ENCODE measurements at regions of chr19 and their contacts with region 1.

Region 1: DNA sequence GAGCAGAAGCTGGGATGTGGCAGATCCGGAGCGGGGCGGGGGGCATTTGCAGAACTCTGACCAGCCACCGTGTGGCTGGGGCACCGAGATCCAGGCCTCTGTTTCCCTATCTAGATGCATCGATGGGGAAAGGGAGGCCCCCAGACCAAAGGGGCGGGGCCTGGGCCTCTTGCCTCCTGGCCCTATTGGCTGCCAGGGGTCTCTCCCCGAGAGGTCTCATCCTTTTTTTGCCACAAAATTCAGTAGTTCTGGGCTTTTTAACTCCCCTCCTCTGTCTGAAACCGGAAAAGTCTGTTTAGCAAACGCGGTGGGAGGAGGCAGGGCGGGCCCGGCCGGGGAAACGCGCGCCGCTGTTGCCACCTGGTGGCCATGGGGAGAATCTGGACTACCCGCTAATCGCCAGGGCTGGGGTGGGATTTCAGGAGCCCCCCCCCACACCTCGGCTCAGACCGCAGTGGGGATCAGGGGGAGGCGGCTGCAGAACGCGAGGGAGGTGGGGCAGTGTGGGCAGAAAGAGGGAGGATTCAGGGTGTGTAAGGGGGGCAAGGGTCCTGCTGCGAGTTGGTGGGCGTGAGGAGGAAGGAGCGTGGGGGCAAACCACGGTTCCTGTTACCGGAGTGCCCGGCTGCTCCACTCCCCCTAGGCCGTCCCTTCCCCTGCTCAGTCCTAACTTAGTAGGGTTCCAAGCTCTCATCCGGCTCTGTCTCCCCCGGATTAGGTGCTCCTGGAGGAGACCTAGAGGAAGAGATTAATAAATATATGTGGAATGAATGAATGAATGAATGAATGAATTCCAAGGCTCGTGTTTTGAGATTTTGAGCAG is 28.3 kb downstream of the IL12RB1 start:
- DNase-seq: peak; percentile 81
- H3K4me3 ChIP-seq: peak overlapping the region in 1 of 4 donors; percentile 17
- H3K27ac ChIP-seq: peak overlapping the region; percentile 66 to 81 (median 78)
- H3K4me1 ChIP-seq: peaks cover 0 to 13% (median 12%) of the 10 kb centered on the region in 4 donors
- H3K27me3 ChIP-seq: peaks cover 3% of the 10 kb centered on the region
- CTCF ChIP-seq: peak; percentile 94 to 99 (median 96)
- EP300 ChIP-seq: no peak
- POLR2A ChIP-seq: no peak

Region 2: DNA sequence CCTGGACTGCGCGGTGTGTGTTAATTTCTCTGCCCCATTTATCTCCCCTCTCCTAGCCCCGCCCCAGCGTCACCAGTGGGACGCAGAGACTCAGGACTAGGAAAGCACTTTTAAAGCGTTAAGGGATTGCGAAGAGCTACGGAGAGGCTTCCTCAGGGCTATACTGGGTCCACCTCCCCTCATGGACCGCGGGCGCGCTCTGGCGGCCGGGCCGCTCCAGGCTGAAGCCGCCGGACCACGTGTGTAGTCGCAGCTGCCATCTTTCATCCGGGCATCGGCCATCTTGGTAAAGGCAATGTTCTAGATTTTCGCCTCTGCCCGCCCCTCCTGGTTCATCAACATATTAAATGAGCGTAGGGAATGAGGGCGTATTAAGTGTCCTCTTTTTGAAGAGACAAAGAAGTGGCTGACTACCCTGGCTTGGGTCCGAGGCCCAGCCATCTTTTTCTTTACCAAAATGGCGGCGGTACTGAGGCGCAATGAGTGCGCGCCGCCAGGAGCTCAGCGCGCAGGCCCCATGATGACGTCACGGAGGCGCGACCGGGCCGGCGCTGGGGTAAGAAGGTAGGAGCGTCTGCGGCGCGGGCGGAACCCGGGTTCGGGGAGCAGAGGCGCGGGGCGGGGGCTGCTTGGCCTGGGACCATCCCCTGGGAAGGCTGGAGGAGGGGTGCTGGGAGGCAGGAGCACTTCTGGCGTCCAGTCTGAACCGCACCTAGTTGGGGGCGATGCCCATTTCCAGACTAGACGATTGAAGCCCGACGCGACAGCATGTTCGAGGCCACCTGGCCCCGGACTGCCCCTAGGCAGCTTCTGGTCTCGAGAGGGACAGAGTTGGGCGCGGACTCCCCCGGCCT is 125.7 kb before region 1 on chr19 and contains the start of gene CCDC124:
- in situ Hi-C with region 1: loop called in 3 of 4 experiments (anchors 10 to 25 kb)
- intact Hi-C with region 1: no loop called
- DNase-seq: peak; percentile 95
- H3K4me3 ChIP-seq: peak within 1 kb of the TSS; percentile 64 to 92 (median 87)
- H3K27ac ChIP-seq: peak within 1 kb of the TSS; percentile 81 to 86 (median 84)
- H3K4me1 ChIP-seq: peaks cover 10 to 22% (median 16%) of the 10 kb centered on the region in 4 donors
- H3K27me3 ChIP-seq: no peaks in the 10 kb centered on the region
- CTCF ChIP-seq: peak; percentile 72 to 99 (median 93)
- EP300 ChIP-seq: no peak
- POLR2A ChIP-seq: peak; percentile 91
- total RNA-seq, gene CCDC124: 36.9 to 93.5 (median 41.4) TPM

Region 3: GRCh38 chr19:17973759-17974158 is 84.7 kb before region 1 on chr19:
- in situ Hi-C with region 1: no loop called
- intact Hi-C with region 1: no loop called
- DNase-seq: no peak
- H3K4me3 ChIP-seq: no peak overlapping the region
- H3K27ac ChIP-seq: no peak overlapping the region
- H3K4me1 ChIP-seq: no peaks in the 10 kb centered on the region
- H3K27me3 ChIP-seq: no peaks in the 10 kb centered on the region
- CTCF ChIP-seq: no peak
- EP300 ChIP-seq: no peak
- POLR2A ChIP-seq: no peak

Region 4: DNA sequence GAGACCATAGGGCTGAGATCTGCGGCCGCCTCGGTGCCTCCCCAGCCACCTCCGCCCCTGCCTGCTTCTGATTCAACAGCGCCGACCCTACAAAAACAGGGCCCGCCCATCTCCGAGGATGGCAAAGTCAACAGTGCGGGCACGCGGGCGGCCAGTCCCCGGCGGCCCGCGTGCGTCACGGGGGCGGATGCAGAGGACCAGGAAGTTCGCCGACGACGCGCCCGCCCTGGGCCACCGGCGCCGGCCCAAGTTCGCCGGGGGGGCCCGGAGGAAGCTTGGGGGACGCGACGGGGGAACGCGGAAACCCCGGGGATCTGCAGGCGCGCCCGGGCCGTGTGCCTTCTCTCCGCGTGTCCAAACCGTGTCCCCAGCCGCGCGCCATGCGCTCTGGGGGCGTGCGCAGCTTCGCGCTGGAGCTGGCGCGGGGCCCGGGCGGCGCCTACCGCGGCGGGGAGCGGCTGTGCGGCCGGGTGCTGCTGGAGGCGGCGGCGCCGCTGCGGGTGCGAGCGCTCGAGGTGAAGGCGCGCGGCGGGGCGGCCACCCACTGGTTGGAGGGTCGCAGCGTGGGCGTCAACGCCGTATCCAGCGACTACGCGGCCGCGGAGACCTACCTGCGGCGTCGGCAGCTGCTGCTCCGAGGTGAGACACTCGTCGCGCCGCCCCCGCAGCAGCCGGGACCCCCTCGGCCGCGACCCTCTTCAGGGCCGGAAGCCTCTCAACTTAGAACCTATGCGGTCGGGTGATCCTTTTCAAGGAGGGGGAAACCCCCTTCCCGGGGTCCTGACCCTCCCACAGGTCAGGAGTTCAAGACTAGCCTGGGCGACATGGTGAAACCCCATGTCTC is 57.3 kb before region 1 on chr19:
- in situ Hi-C with region 1: loop called in 3 of 4 experiments (anchors 5 to 10 kb)
- intact Hi-C with region 1: loop called (anchors 2 kb)
- DNase-seq: peak; percentile 95
- H3K4me3 ChIP-seq: peak overlapping the region; percentile 69 to 86 (median 78)
- H3K27ac ChIP-seq: peak overlapping the region; percentile 89 to 92 (median 90)
- H3K4me1 ChIP-seq: peaks cover 4 to 28% (median 19%) of the 10 kb centered on the region in 4 donors
- H3K27me3 ChIP-seq: no peaks in the 10 kb centered on the region
- CTCF ChIP-seq: no peak
- EP300 ChIP-seq: no peak
- POLR2A ChIP-seq: peak; percentile 84

Region 5: DNA sequence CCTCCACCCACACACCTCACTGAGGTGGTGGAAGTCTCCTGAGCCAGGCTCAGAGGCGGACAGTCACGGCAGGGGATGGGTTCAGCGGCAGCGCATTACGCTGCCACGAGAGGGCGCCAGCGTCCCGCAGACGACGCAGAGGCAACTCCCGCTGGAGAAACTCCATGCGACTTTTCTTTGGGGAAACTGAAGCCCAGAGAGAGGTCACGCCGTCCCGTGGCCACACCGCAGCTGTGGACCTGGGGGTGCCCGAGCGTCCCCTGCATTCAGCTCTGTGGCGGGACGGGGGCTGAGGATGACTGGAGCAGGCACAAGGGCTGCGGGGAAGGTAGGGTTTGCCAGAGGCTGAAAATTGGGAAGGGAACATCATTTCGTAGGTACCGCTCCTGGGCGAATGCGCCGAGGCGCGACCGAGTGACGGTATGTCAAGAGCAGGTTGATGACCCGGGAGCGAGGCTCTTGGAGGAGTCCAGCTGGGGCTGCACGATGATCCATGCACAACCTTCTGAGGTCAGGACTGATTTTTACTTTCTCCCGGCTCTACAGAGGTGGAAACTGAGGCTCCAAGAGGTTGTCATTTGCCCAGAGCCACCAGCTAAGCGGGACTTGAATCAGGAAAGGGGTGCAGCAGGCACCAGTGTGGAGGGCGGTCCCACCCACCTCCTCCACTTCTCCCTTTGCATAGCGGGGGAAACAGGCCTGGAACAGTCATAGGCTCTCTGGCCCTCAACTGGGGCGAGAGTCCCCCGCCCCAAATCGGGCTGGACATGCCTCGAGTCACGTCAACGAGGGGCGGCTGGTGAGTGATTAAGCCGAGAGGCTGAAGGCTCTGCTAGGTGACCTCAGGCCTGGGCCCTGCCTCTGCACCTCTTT is 51.1 kb before region 1 on chr19:
- in situ Hi-C with region 1: loop called (anchors 5 to 10 kb)
- intact Hi-C with region 1: loop called (anchors 2 kb)
- DNase-seq: peak; percentile 88
- H3K4me3 ChIP-seq: peak overlapping the region; percentile 3 to 52 (median 40)
- H3K27ac ChIP-seq: peak overlapping the region; percentile 80 to 89 (median 86)
- H3K4me1 ChIP-seq: peaks cover 0 to 26% (median 18%) of the 10 kb centered on the region in 4 donors
- H3K27me3 ChIP-seq: no peaks in the 10 kb centered on the region
- CTCF ChIP-seq: peak; percentile 95 to 99 (median 98)
- EP300 ChIP-seq: no peak
- POLR2A ChIP-seq: peak; percentile 11

Region 6: DNA sequence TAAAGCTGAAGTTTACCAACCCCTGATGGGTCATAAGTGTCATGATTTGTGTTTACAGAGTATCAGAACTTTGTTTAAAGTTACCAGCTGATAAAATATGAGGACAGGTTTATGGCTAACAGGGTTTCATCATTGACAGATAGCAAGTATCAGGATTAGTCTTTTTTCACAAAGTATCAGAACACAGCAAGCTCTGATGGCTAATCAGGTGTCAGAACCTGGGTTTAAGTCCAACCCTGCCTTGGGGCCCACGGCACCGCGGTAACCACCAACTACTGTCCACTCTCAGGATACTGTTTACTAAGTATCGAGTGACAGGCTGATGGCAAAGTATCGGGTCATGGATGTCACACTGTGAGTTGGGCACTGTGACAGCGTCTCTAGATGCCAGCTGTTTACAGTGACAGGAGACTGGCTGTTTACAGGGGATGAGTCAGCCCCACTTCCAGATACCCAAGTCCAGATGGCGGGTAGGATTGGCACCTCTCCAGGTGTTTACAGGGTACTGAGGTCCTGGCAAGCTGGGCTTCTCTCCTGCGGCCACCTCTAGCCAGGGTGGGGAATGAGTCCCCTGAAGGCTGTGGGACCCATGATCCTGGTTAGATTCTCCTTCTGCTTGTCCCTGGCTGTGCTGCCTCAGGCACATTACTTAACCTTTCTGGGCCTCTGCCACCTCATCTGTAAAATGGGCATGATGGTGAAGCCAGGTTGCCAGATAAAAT is 28.6 kb before region 1 on chr19:
- in situ Hi-C with region 1: no loop called
- intact Hi-C with region 1: no loop called
- DNase-seq: peak; percentile 59
- H3K4me3 ChIP-seq: no peak overlapping the region
- H3K27ac ChIP-seq: peak overlapping the region in 2 of 4 donors; percentile 11 to 15
- H3K4me1 ChIP-seq: peaks cover 0 to 13% (median 0%) of the 10 kb centered on the region in 4 donors
- H3K27me3 ChIP-seq: no peaks in the 10 kb centered on the region
- CTCF ChIP-seq: no peak
- EP300 ChIP-seq: no peak
- POLR2A ChIP-seq: no peak

Region 7: DNA sequence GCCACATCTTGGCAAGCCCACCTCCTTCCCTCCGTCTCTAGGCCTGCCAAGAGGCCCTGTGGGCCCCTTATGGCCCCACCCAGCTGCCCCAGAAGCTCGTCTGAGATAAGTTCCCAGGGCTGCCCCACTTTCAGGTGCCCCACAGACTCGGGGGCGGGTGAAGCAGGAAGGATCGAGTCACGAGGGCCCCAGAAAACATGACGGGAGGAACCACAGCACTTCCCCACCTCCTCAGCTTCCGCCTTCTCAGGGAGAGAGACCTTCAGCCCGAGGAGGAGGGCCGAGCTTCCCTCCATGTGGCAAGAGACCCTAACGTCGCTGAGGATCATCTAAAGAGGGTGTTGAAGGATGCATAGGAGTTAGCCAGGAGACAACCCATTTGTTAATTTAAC is 32.8 kb after region 1 on chr19:
- in situ Hi-C with region 1: no loop called
- intact Hi-C with region 1: no loop called
- DNase-seq: peak; percentile 78
- H3K4me3 ChIP-seq: no peak overlapping the region
- H3K27ac ChIP-seq: peak overlapping the region; percentile 42 to 72 (median 60)
- H3K4me1 ChIP-seq: peaks cover 0 to 7% (median 2%) of the 10 kb centered on the region in 4 donors
- H3K27me3 ChIP-seq: no peaks in the 10 kb centered on the region
- CTCF ChIP-seq: no peak
- EP300 ChIP-seq: no peak
- POLR2A ChIP-seq: peak; percentile 34